T-cell (primary cell): ENCODE measurements at regions of chr1 and their contacts with region 1.

Region 1: GRCh38 chr1:160618763-160619274 is 28.0 kb downstream of the SLAMF1 start:
- DNase-seq: peak in 27 of 35 experiments; percentile 15 to 72 (median 37)
- ATAC-seq: peak in 3 of 4 experiments; percentile 37 to 52 (median 42)
- H3K4me3 ChIP-seq: no peak overlapping the region
- H3K4me3 Mint-ChIP-seq: no peak overlapping the region
- H3K27ac ChIP-seq: peak overlapping the region; percentile 24
- H3K27ac Mint-ChIP-seq: peak overlapping the region; percentile 46 to 55
- H3K4me1 ChIP-seq: peaks cover 18 to 29% of the 10 kb centered on the region in 2 experiments
- H3K4me1 Mint-ChIP-seq: peaks cover 60 to 72% (median 67%) of the 10 kb centered on the region in 3 donors
- H3K27me3 ChIP-seq: no peaks in the 10 kb centered on the region
- H3K27me3 Mint-ChIP-seq: no peaks in the 10 kb centered on the region

Region 2: DNA sequence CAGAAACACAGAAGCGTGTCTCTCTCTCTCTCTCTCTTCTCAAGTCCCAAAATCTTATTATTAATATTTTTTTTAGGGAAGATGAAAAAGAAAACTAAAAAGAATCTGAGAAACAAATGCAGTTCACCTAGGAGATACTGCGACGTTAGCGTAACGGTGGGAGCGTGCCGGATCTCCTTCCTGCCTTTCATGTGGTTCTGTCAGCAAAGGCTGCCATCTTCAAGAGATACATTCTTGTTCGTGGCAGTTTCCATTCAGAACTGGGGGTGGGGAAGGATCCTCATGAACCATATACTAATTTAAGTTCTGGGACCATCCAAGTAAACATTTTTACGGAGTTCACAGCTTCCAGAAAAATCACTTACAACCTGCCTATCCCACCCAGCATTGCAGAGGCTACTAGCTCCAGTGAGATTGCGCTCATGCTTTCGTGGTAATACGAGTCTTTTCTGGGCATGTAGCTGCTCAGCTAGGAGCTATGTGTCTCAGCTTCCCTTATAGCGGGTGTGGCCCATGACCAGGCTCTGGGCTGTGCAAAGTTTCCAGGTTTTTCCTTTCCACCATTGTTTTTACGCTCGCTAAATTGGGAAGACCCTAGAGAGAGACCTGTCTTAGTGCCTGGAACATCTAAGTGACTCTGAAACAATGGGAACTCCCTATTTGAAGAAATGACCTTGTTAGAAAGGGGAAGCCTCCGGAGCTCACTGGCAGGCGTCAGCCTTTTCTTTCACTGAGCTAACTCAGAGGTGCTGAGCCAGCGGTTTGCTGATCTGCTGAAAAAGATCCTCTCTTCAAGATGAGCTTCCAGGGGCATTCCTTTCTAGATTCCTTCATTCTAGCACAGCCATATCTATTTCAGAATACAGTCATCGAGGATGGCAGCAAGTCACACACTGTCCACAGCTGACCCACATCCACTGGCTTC is 10.7 kb after region 1 on chr1:
- CTCF ChIA-PET with region 1: interaction called, 5 to 11 read pairs
- POLR2A ChIA-PET with region 1: interaction called in 1 of 2 experiments, 3 read pairs
- DNase-seq: peak; percentile 47 to 92 (median 80)
- ATAC-seq: peak; percentile 85 to 91 (median 87)
- H3K4me3 ChIP-seq: peak overlapping the region; percentile 33 to 50
- H3K4me3 Mint-ChIP-seq: peak overlapping the region; percentile 66 to 78 (median 73)
- H3K27ac ChIP-seq: peak overlapping the region; percentile 95
- H3K27ac Mint-ChIP-seq: peak overlapping the region; percentile 96 to 98
- H3K4me1 ChIP-seq: peaks cover 81 to 95% of the 10 kb centered on the region in 2 experiments
- H3K4me1 Mint-ChIP-seq: peaks cover 92 to 98% (median 98%) of the 10 kb centered on the region in 3 donors
- H3K27me3 ChIP-seq: no peaks in the 10 kb centered on the region
- H3K27me3 Mint-ChIP-seq: no peaks in the 10 kb centered on the region

Region 3: GRCh38 chr1:160639652-160640051 is 20.8 kb after region 1 on chr1:
- CTCF ChIA-PET with region 1: interaction called in 1 of 2 experiments, 20 read pairs
- POLR2A ChIA-PET with region 1: interaction called, 3 to 4 read pairs
- DNase-seq: peak in 1 of 35 experiments; percentile 56
- ATAC-seq: no peak
- H3K4me3 ChIP-seq: peak overlapping the region in 1 of 2 donors; percentile 1
- H3K4me3 Mint-ChIP-seq: peak overlapping the region; percentile 70 to 98 (median 75)
- H3K27ac ChIP-seq: peak overlapping the region; percentile 90
- H3K27ac Mint-ChIP-seq: peak overlapping the region; percentile 96 to 98
- H3K4me1 ChIP-seq: peaks cover 70 to 73% of the 10 kb centered on the region in 2 experiments
- H3K4me1 Mint-ChIP-seq: peaks cover 94 to 97% (median 94%) of the 10 kb centered on the region in 3 donors
- H3K27me3 ChIP-seq: no peaks in the 10 kb centered on the region
- H3K27me3 Mint-ChIP-seq: no peaks in the 10 kb centered on the region

Region 4: GRCh38 chr1:160646711-160647328 is 28.0 kb after region 1 on chr1 and contains the start of gene SLAMF1:
- CTCF ChIA-PET with region 1: interaction called in 1 of 2 experiments, 21 read pairs
- POLR2A ChIA-PET with region 1: no interaction called
- DNase-seq: peak in 9 of 35 experiments; percentile 12 to 68 (median 35)
- ATAC-seq: peak; percentile 69 to 83 (median 74)
- H3K4me3 ChIP-seq: peak within 1 kb of the TSS; percentile 79 to 95
- H3K4me3 Mint-ChIP-seq: peak within 1 kb of the TSS; percentile 93 to 98 (median 96)
- H3K27ac ChIP-seq: peak within 1 kb of the TSS; percentile 70
- H3K27ac Mint-ChIP-seq: peak within 1 kb of the TSS; percentile 97 to 100
- H3K4me1 ChIP-seq: peaks cover 33 to 40% of the 10 kb centered on the region in 2 experiments
- H3K4me1 Mint-ChIP-seq: peaks cover 76 to 83% (median 81%) of the 10 kb centered on the region in 3 donors
- H3K27me3 ChIP-seq: no peaks in the 10 kb centered on the region
- H3K27me3 Mint-ChIP-seq: no peaks in the 10 kb centered on the region
- total RNA-seq, gene SLAMF1: 19.4 to 38.7 (median 30.7) TPM

Region 5: DNA sequence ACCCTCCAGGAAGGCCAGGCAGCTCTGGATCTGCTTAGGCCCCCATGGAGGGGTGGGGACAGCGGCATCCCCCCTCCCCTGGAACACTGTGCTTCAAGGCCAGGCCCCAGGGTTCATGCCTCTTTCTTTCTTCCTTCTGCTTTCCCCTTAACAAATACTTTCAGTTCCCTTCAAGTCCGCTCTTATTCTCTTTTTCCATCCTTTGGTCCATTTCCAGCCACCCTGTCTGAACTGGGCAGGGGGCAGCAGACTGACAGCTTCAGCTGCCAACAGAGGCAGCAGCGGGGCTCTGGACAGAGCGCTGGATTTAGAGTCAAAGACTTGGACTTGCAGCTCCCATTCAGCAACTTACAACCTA is 244.9 kb after region 1 on chr1:
- CTCF ChIA-PET with region 1: no interaction called
- POLR2A ChIA-PET with region 1: no interaction called
- DNase-seq: no peak
- ATAC-seq: no peak
- H3K4me3 ChIP-seq: no peak overlapping the region
- H3K4me3 Mint-ChIP-seq: peak overlapping the region in 1 of 3 donors; percentile 10
- H3K27ac ChIP-seq: no peak overlapping the region
- H3K27ac Mint-ChIP-seq: peak overlapping the region in 1 of 2 donors; percentile 41
- H3K4me1 ChIP-seq: peaks cover 2 to 43% of the 10 kb centered on the region in 2 experiments
- H3K4me1 Mint-ChIP-seq: peaks cover 21 to 38% (median 27%) of the 10 kb centered on the region in 3 donors
- H3K27me3 ChIP-seq: no peaks in the 10 kb centered on the region
- H3K27me3 Mint-ChIP-seq: no peaks in the 10 kb centered on the region

Region 6: GRCh38 chr1:160877221-160877620 is 258.4 kb after region 1 on chr1:
- CTCF ChIA-PET with region 1: no interaction called
- POLR2A ChIA-PET with region 1: no interaction called
- DNase-seq: peak in 11 of 35 experiments; percentile 6 to 70 (median 20)
- ATAC-seq: peak; percentile 69 to 81 (median 74)
- H3K4me3 ChIP-seq: no peak overlapping the region
- H3K4me3 Mint-ChIP-seq: no peak overlapping the region
- H3K27ac ChIP-seq: no peak overlapping the region
- H3K27ac Mint-ChIP-seq: peak overlapping the region; percentile 19 to 66
- H3K4me1 ChIP-seq: peaks cover 2 to 21% of the 10 kb centered on the region in 2 experiments
- H3K4me1 Mint-ChIP-seq: peaks cover 21 to 27% (median 27%) of the 10 kb centered on the region in 3 donors
- H3K27me3 ChIP-seq: no peaks in the 10 kb centered on the region
- H3K27me3 Mint-ChIP-seq: no peaks in the 10 kb centered on the region